ENCODE measurements at regions of chr9 and their contacts with region 1.

Region 1: GRCh38 chr9:36190388-36191287 is at the start of gene CLTA:
- DNase-seq: peak; percentile 83 to 98 (median 94)
- ATAC-seq: peak; percentile 98 to 99 (median 98)
- H3K4me3 ChIP-seq: peak within 1 kb of the TSS; percentile 68 to 72
- H3K4me3 Mint-ChIP-seq: peak within 1 kb of the TSS; percentile 91 to 94 (median 92)
- H3K27ac ChIP-seq: peak within 1 kb of the TSS; percentile 62
- H3K27ac Mint-ChIP-seq: peak within 1 kb of the TSS; percentile 92 to 94
- H3K4me1 ChIP-seq: peaks cover 24 to 31% of the 10 kb centered on the region in 2 experiments
- H3K4me1 Mint-ChIP-seq: peaks cover 45 to 57% (median 46%) of the 10 kb centered on the region in 3 donors
- H3K27me3 ChIP-seq: no peaks in the 10 kb centered on the region
- H3K27me3 Mint-ChIP-seq: peaks cover 0 to 5% of the 10 kb centered on the region in 2 donors
- total RNA-seq, gene CLTA: 40.2 to 79.0 (median 70.0) TPM

Region 2: GRCh38 chr9:35452481-35452880 is 738.2 kb before region 1 on chr9:
- CTCF ChIA-PET with region 1: no interaction called
- POLR2A ChIA-PET with region 1: no interaction called
- DNase-seq: no peak
- ATAC-seq: no peak
- H3K4me3 ChIP-seq: no peak overlapping the region
- H3K4me3 Mint-ChIP-seq: no peak overlapping the region
- H3K27ac ChIP-seq: no peak overlapping the region
- H3K27ac Mint-ChIP-seq: no peak overlapping the region
- H3K4me1 ChIP-seq: no peaks in the 10 kb centered on the region
- H3K4me1 Mint-ChIP-seq: no peaks in the 10 kb centered on the region
- H3K27me3 ChIP-seq: peaks cover 0 to 14% of the 10 kb centered on the region in 2 experiments
- H3K27me3 Mint-ChIP-seq: peaks cover 32 to 37% of the 10 kb centered on the region in 2 donors

Region 3: GRCh38 chr9:35778496-35778895 is 412.1 kb before region 1 on chr9:
- CTCF ChIA-PET with region 1: no interaction called
- POLR2A ChIA-PET with region 1: no interaction called
- DNase-seq: no peak
- ATAC-seq: no peak
- H3K4me3 ChIP-seq: no peak overlapping the region
- H3K4me3 Mint-ChIP-seq: no peak overlapping the region
- H3K27ac ChIP-seq: no peak overlapping the region
- H3K27ac Mint-ChIP-seq: no peak overlapping the region
- H3K4me1 ChIP-seq: no peaks in the 10 kb centered on the region
- H3K4me1 Mint-ChIP-seq: peaks cover 2 to 10% (median 2%) of the 10 kb centered on the region in 3 donors
- H3K27me3 ChIP-seq: no peaks in the 10 kb centered on the region
- H3K27me3 Mint-ChIP-seq: no peaks in the 10 kb centered on the region

Region 4: DNA sequence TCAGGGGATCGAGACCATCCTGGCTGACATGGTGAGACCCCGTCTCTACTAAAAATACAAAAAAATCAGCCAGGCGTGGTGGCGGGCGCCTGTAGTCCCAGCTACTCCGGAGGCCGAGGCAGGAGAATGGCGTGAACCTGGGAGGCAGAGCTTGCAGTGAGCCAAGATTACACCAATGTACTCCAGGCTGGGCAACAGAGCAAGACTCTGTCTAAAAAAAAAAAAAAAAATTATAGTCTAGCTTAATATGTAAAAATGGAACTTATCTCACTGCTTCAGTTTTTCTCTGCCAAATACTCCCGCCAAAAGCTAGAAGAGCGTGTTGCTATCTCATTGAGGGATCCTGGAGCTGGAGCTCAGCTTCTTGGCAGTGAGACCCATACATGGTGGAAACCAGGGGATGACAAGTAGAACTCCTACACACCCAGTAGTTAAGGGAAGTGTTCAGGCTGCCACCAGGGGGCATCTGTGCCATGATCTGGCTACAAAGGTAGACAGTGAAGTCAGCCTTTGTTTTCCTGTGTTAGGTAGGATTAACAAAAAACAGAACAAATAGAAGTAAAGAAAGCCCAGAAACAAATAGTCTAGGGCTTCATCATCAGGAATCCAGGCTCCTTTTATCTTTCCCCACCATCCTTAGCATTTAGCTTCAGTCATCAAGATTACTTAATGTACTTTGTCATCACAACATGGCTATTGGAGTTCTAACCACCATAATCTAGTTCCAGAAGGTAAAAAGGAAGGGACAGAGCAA is 87.7 kb before region 1 on chr9:
- CTCF ChIA-PET with region 1: interaction called, 6 to 14 read pairs
- POLR2A ChIA-PET with region 1: interaction called in 1 of 2 experiments, 4 read pairs
- DNase-seq: peak; percentile 73 to 92 (median 85)
- ATAC-seq: peak; percentile 99 to 100 (median 100)
- H3K4me3 ChIP-seq: no peak overlapping the region
- H3K4me3 Mint-ChIP-seq: no peak overlapping the region
- H3K27ac ChIP-seq: no peak overlapping the region
- H3K27ac Mint-ChIP-seq: peak overlapping the region in 1 of 2 donors; percentile 16
- H3K4me1 ChIP-seq: no peaks in the 10 kb centered on the region
- H3K4me1 Mint-ChIP-seq: peaks cover 7 to 12% (median 7%) of the 10 kb centered on the region in 3 donors
- H3K27me3 ChIP-seq: no peaks in the 10 kb centered on the region
- H3K27me3 Mint-ChIP-seq: no peaks in the 10 kb centered on the region

Region 5: GRCh38 chr9:36166101-36166927 is 24.3 kb before region 1 on chr9:
- CTCF ChIA-PET with region 1: interaction called in 1 of 2 experiments, 18 read pairs
- POLR2A ChIA-PET with region 1: interaction called in 1 of 2 experiments, 3 read pairs
- DNase-seq: peak; percentile 35 to 89 (median 70)
- ATAC-seq: peak; percentile 96 to 98 (median 96)
- H3K4me3 ChIP-seq: peak overlapping the region; percentile 59 to 60
- H3K4me3 Mint-ChIP-seq: peak overlapping the region; percentile 63 to 78 (median 67)
- H3K27ac ChIP-seq: no peak overlapping the region
- H3K27ac Mint-ChIP-seq: peak overlapping the region in 1 of 2 donors; percentile 64
- H3K4me1 ChIP-seq: peaks cover 0 to 17% of the 10 kb centered on the region in 2 experiments
- H3K4me1 Mint-ChIP-seq: peaks cover 8 to 24% (median 9%) of the 10 kb centered on the region in 3 donors
- H3K27me3 ChIP-seq: peaks cover 0 to 4% of the 10 kb centered on the region in 2 experiments
- H3K27me3 Mint-ChIP-seq: no peaks in the 10 kb centered on the region

Region 6: DNA sequence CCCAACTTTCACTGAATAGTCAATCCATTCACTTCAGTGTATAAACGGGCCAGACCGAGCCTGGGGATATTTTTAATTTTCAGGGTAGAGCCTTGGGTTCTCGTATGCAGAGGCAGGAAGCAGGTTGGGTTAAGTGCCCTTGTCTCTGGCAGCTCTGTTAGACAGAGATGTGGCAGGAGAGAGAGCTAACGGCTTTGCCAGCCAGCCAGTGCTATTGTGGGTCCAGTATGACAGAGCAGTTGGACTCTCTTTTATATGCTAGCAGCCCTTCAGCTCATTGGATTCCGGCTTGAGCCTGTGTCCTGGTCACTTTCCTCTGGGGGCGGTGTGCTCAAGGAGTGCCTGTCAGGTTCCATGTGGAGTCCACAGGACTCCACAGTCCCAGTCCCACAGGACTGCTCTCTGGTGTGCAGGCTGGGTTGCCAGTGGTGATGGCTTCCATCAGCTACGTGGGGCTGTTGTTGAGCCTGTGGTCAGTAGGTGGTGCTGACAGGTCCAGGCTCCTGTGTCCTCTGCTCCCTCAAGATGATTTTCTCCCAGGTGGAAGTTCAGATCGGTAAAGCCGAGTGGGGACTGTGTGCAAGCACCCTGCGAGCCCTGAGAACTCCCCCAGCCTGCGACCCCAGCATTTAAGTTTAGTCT is 14.4 kb after region 1 on chr9:
- CTCF ChIA-PET with region 1: interaction called in 1 of 2 experiments, 19 read pairs
- POLR2A ChIA-PET with region 1: interaction called in 1 of 2 experiments, 3 read pairs
- DNase-seq: no peak
- ATAC-seq: no peak
- H3K4me3 ChIP-seq: no peak overlapping the region
- H3K4me3 Mint-ChIP-seq: no peak overlapping the region
- H3K27ac ChIP-seq: no peak overlapping the region
- H3K27ac Mint-ChIP-seq: no peak overlapping the region
- H3K4me1 ChIP-seq: peaks cover 0 to 8% of the 10 kb centered on the region in 2 experiments
- H3K4me1 Mint-ChIP-seq: peaks cover 25 to 49% (median 47%) of the 10 kb centered on the region in 3 donors
- H3K27me3 ChIP-seq: no peaks in the 10 kb centered on the region
- H3K27me3 Mint-ChIP-seq: no peaks in the 10 kb centered on the region

Region 7: DNA sequence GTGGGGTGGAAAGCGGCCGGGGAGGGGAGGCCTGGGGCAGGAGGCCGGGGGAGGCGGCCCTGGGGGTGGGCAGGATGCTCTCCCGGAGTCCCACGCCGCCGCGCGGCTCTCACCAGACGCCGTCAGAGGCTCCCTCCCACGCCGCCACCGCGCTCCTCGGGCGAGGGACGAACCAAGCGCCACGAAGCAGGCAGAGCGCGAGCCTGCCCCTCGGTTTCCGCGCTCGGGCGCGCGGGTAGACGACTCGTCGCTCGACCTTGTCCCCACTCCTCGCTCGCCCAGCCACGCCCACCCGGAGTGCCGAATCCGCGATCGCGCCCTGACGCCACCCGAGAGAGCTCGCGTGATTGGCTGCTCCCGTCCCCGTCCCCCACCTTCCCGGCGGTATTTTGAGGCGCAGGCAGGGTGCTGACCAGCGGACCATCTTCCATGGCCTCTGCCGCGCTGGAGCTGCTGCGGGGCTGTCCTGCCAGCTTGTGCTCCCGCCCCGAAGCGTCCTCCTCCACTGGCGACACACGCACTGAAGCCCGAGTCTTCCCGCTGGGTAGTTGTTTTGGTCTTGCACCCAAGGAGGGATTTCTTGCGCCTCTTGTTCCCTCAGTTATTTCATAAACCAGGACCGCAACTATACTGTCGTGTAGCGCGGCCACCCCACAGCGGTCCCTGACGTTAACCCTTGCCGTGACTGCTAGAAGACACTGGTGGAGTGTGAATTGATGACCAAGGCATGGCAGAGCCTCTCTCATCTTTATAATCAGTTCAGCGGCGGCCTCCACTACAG is 67.8 kb after region 1 on chr9 and contains the start of gene GNE:
- CTCF ChIA-PET with region 1: interaction called in 1 of 2 experiments, 11 read pairs
- POLR2A ChIA-PET with region 1: interaction called in 1 of 2 experiments, 4 read pairs
- DNase-seq: peak; percentile 93 to 99 (median 97)
- ATAC-seq: peak; percentile 87 to 93 (median 92)
- H3K4me3 ChIP-seq: peak within 1 kb of the TSS; percentile 74 to 79
- H3K4me3 Mint-ChIP-seq: peak within 1 kb of the TSS; percentile 91 to 97 (median 96)
- H3K27ac ChIP-seq: peak within 1 kb of the TSS; percentile 75
- H3K27ac Mint-ChIP-seq: peak within 1 kb of the TSS; percentile 94 to 95
- H3K4me1 ChIP-seq: peaks cover 2 to 18% of the 10 kb centered on the region in 2 experiments
- H3K4me1 Mint-ChIP-seq: peaks cover 8 to 20% (median 16%) of the 10 kb centered on the region in 3 donors
- H3K27me3 ChIP-seq: no peaks in the 10 kb centered on the region
- H3K27me3 Mint-ChIP-seq: no peaks in the 10 kb centered on the region
- total RNA-seq, gene GNE: 12.3 to 17.0 (median 14.9) TPM

Region 8: DNA sequence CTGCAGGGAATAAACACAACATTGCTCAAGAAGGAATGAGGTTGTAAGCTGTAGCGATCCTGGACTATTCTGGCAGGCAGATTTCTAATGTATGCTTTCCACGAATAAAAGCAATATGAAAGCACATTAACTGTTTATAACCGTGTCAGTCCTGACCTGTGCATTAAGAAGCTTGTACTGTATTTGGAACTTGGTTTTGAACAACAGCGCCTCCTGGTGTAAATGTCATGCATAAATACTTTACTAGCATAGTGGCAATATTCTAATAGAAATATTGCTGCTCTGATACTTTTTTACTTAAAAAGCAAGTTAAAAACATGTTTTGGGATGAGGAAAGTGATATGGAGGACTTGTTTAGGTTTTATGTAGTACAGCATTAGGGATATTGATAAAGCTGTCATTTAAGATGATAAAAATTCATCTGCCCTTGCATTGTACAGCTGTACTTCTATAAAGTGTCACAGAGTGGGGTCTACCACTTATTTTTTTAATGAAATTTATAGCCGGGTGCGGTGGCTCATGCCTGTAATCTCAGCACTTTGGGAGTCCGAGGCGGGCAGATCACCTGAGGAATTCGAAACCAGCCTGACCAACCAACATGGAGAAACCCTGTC is 138.3 kb after region 1 on chr9:
- CTCF ChIA-PET with region 1: interaction called, 3 to 13 read pairs
- POLR2A ChIA-PET with region 1: no interaction called
- DNase-seq: peak in 25 of 35 experiments; percentile 7 to 82 (median 30)
- ATAC-seq: peak; percentile 68 to 73 (median 70)
- H3K4me3 ChIP-seq: no peak overlapping the region
- H3K4me3 Mint-ChIP-seq: no peak overlapping the region
- H3K27ac ChIP-seq: no peak overlapping the region
- H3K27ac Mint-ChIP-seq: no peak overlapping the region
- H3K4me1 ChIP-seq: no peaks in the 10 kb centered on the region
- H3K4me1 Mint-ChIP-seq: peaks cover 3 to 7% (median 6%) of the 10 kb centered on the region in 3 donors
- H3K27me3 ChIP-seq: no peaks in the 10 kb centered on the region
- H3K27me3 Mint-ChIP-seq: no peaks in the 10 kb centered on the region

Measured in T-cell (primary cell).